Common myeloid progenitor, CD34-positive (primary cell): ENCODE measurements at regions of chr11 and their contacts with region 1.

Region 1: DNA sequence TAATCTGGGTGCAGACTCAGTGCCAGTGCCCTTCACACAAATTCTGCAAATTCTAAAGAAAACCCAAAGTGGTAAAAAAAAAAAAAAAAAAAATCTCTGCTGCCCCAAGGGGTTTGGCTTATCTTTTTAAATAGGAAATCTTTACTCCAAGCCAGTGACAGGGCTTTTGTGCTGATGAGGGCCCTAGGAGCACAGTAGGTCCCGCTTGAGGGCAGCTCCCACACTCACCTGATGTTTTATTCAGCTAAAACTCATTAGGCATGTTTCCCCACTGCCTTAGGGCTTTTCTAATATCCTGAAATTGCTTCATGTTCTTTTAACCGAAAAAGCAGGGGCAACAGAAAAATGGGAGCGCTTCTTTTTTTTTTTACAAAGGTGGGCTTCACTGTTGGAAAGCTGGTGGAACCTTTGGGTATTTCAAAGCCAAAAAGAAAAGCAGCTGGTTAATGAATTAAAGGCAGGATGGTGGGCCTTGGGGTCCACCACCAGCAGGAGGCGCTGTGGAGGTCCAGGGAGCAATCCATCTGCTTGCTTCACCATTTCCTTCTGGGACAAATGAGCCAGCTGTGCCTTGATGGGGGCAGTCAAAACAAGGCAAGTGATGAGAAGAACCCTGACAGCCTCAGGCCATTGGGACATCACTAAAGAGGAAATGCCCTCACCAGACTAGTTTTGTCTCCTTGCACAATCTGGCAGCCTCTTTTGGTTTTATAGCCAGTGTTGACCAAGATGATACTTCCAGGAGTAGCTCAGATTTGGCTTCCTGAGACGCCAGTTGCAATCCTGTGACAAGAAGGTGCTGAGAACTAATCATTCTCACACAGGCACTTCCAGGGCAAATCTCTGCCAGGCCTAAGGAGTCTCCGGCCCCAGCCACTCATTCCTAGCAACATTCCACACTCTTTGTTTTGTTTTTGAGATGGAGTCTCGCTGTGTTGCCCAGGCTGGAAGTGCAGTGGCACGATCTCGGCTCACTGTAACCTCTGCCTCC is 38.4 kb upstream of the WEE1 start:
- DNase-seq: peak; percentile 65 to 81 (median 73)
- H3K4me3 ChIP-seq: no peak overlapping the region
- H3K27ac ChIP-seq: no peak overlapping the region
- H3K4me1 ChIP-seq: no peaks in the 10 kb centered on the region
- H3K27me3 ChIP-seq: no peaks in the 10 kb centered on the region

Region 2: GRCh38 chr11:9550191-9550628 is 15.1 kb after region 1 on chr11:
- CTCF ChIA-PET with region 1: interaction called, 15 read pairs
- POLR2A ChIA-PET with region 1: no interaction called
- DNase-seq: peak in 1 of 3 donors; percentile 19
- H3K4me3 ChIP-seq: no peak overlapping the region
- H3K27ac ChIP-seq: peak overlapping the region in 1 of 2 experiments; percentile 61
- H3K4me1 ChIP-seq: peaks cover 0 to 25% (median 18%) of the 10 kb centered on the region in 4 experiments
- H3K27me3 ChIP-seq: no peaks in the 10 kb centered on the region

Region 3: GRCh38 chr11:9594267-9595046 is 59.4 kb after region 1 on chr11:
- CTCF ChIA-PET with region 1: interaction called, 11 read pairs
- POLR2A ChIA-PET with region 1: no interaction called
- DNase-seq: no peak
- H3K4me3 ChIP-seq: no peak overlapping the region
- H3K27ac ChIP-seq: no peak overlapping the region
- H3K4me1 ChIP-seq: no peaks in the 10 kb centered on the region
- H3K27me3 ChIP-seq: no peaks in the 10 kb centered on the region

Region 4: GRCh38 chr11:9703280-9703679 is 168.2 kb after region 1 on chr11:
- CTCF ChIA-PET with region 1: no interaction called
- POLR2A ChIA-PET with region 1: no interaction called
- DNase-seq: peak in 2 of 3 donors; percentile 47 to 66
- H3K4me3 ChIP-seq: peak overlapping the region in 1 of 7 experiments; percentile 20
- H3K27ac ChIP-seq: peak overlapping the region; percentile 25 to 48
- H3K4me1 ChIP-seq: peaks cover 2 to 42% (median 28%) of the 10 kb centered on the region in 4 experiments
- H3K27me3 ChIP-seq: no peaks in the 10 kb centered on the region